ENCODE measurements at regions of chr12 and their contacts with region 1.

Region 1: GRCh38 chr12:53500776-53501614 is at the start of gene TARBP2:
- DNase-seq: peak; percentile 94
- ATAC-seq: peak; percentile 81
- H3K4me3 Mint-ChIP-seq: peak within 1 kb of the TSS; percentile 92
- H3K27ac Mint-ChIP-seq: peak within 1 kb of the TSS; percentile 96
- H3K4me1 Mint-ChIP-seq: peaks cover 36% of the 10 kb centered on the region
- H3K27me3 Mint-ChIP-seq: no peaks in the 10 kb centered on the region
- CTCF ChIP-seq: no peak
- total RNA-seq, gene TARBP2: 45.7 and 49.6 TPM in 2 replicates

Region 2: GRCh38 chr12:53005986-53006809 is 494.8 kb before region 1 on chr12 and contains the start of gene EIF4B:
- CTCF ChIA-PET with region 1: no interaction called
- POLR2A ChIA-PET with region 1: interaction called, 11 read pairs
- intact Hi-C with region 1: no loop called
- DNase-seq: peak; percentile 97
- ATAC-seq: peak; percentile 90
- H3K4me3 Mint-ChIP-seq: peak within 1 kb of the TSS; percentile 98
- H3K27ac Mint-ChIP-seq: peak within 1 kb of the TSS; percentile 98
- H3K4me1 Mint-ChIP-seq: peaks cover 51% of the 10 kb centered on the region
- H3K27me3 Mint-ChIP-seq: peaks cover 1% of the 10 kb centered on the region
- CTCF ChIP-seq: no peak
- total RNA-seq, gene EIF4B: 726 and 733 TPM in 2 replicates

Region 3: DNA sequence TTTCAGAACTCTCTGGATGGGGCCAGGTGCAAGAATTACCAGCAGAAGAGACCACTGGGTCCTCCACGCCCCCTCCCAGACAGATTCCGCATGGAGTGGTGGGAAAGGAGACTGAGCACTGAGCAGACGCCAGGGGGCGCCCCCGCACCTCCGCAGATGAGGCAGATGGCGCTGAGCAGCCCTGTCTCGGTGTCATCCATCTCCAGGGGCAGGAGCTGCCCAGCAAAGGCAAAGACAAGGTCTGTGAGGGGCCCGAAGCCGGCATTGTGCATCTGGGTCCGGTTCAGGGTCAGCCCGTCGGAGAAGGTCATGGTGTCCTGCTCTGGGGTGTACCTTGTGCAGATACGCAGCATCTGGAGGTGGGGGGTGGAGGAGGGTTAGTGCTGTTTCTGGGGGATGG is 287.6 kb before region 1 on chr12:
- CTCF ChIA-PET with region 1: no interaction called
- POLR2A ChIA-PET with region 1: no interaction called
- intact Hi-C with region 1: loop called (anchors 10 kb)
- DNase-seq: peak; percentile 82
- ATAC-seq: peak; percentile 75
- H3K4me3 Mint-ChIP-seq: no peak overlapping the region
- H3K27ac Mint-ChIP-seq: peak overlapping the region; percentile 6
- H3K4me1 Mint-ChIP-seq: peaks cover 76% of the 10 kb centered on the region
- H3K27me3 Mint-ChIP-seq: no peaks in the 10 kb centered on the region
- CTCF ChIP-seq: peak; percentile 49

Region 4: DNA sequence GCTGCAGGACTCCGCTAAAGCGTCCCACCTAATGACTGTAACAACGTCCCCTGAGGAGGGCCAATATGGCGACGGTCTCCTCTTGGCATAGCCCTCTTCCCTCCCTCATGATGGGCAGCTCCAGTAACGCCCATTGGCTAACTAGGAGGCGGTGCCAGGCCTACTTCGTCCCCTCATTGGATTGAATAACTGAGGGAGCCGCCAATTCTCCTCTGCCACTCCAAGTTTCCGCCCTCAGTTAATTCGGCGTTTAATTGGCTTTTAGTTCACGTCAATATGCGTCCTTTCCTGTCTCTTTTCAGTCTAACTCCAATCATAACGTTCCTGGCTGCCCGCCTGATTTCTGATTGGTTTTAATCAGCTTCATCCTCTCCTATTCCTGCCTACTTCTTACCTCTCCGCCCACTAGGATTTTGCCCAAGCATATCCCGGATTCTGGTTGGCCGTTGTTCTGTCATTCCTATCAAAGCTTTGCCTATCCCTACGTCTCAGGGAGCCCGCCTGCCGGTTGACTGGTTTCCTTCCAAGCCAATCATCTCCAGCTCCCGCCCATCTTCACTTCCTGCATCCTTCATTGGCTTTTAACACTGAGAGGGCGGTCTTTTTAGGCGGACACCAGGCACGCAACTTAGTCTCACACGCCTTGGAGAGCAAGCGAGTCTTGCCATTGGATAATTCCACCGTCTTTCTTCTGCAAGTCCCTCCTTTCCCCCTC is 121.4 kb before region 1 on chr12:
- CTCF ChIA-PET with region 1: no interaction called
- POLR2A ChIA-PET with region 1: interaction called, 45 read pairs
- intact Hi-C with region 1: loop called (anchors 1 kb)
- DNase-seq: peak; percentile 70
- ATAC-seq: peak; percentile 72
- H3K4me3 Mint-ChIP-seq: no peak overlapping the region
- H3K27ac Mint-ChIP-seq: no peak overlapping the region
- H3K4me1 Mint-ChIP-seq: peaks cover 37% of the 10 kb centered on the region
- H3K27me3 Mint-ChIP-seq: no peaks in the 10 kb centered on the region
- CTCF ChIP-seq: no peak

Region 5: GRCh38 chr12:53451661-53452158 is 49.3 kb before region 1 on chr12 and contains the start of gene PCBP2:
- CTCF ChIA-PET with region 1: no interaction called
- POLR2A ChIA-PET with region 1: interaction called, 7 read pairs
- intact Hi-C with region 1: loop called (anchors 1 kb)
- DNase-seq: peak; percentile 92
- ATAC-seq: peak; percentile 92
- H3K4me3 Mint-ChIP-seq: peak within 1 kb of the TSS; percentile 99
- H3K27ac Mint-ChIP-seq: peak within 1 kb of the TSS; percentile 99
- H3K4me1 Mint-ChIP-seq: peaks cover 30% of the 10 kb centered on the region
- H3K27me3 Mint-ChIP-seq: no peaks in the 10 kb centered on the region
- CTCF ChIP-seq: no peak
- total RNA-seq, gene PCBP2: 841 and 853 TPM in 2 replicates

Region 6: GRCh38 chr12:53514628-53515290 is 13.8 kb after region 1 on chr12:
- CTCF ChIA-PET with region 1: interaction called, 3 read pairs
- POLR2A ChIA-PET with region 1: interaction called, 11 read pairs
- intact Hi-C with region 1: no loop called
- DNase-seq: no peak
- ATAC-seq: no peak
- H3K4me3 Mint-ChIP-seq: no peak overlapping the region
- H3K27ac Mint-ChIP-seq: no peak overlapping the region
- H3K4me1 Mint-ChIP-seq: no peaks in the 10 kb centered on the region
- H3K27me3 Mint-ChIP-seq: no peaks in the 10 kb centered on the region
- CTCF ChIP-seq: no peak

Region 7: GRCh38 chr12:53727310-53728041 is 226.5 kb after region 1 on chr12 and contains the start of gene CALCOCO1:
- CTCF ChIA-PET with region 1: no interaction called
- POLR2A ChIA-PET with region 1: no interaction called
- intact Hi-C with region 1: loop called (anchors 1 kb)
- DNase-seq: peak; percentile 90
- ATAC-seq: peak; percentile 97
- H3K4me3 Mint-ChIP-seq: peak within 1 kb of the TSS; percentile 97
- H3K27ac Mint-ChIP-seq: peak within 1 kb of the TSS; percentile 88
- H3K4me1 Mint-ChIP-seq: peaks cover 24% of the 10 kb centered on the region
- H3K27me3 Mint-ChIP-seq: no peaks in the 10 kb centered on the region
- CTCF ChIP-seq: no peak
- total RNA-seq, gene CALCOCO1: 44.2 and 59.5 TPM in 2 replicates